Posterior cingulate gyrus (tissue), 11 donors: ENCODE measurements at regions of chr4 and their contacts with region 1.

Region 1: DNA sequence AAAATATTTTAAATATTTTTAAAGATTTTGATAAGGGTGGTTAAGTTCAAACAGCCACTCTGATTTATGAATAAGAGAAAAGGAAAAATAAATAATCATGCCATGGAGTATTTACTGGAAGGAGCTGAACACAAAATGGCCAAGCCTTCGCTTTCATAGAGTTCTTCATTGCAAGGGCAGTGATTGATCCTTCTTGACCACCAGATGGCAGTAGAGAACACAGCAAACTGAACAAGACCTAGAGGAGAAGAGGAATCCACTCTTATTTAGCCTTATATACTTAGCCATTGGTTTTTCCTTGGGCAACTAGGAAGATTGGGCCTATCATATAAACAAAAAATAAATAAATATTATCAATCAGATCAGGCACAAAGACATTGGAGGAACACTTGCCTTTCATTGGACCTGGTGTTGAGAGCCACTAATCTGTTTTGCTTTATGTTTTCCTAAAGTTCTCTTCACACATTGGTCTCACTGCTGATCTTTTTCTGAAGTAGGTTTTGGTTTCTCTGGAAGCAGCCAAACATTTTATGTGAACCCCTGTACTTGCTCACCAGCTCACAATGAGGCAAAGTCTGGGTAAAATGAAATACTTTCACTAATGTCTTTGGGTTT is 58.1 kb upstream of the PARM1 start:
- DNase-seq: peak in 3 of 10 donors; percentile 14 to 38 (median 24)

Region 2: GRCh38 chr4:74738470-74739140 is 136.3 kb before region 1 on chr4:
- intact Hi-C with region 1: no loop called
- DNase-seq: no peak

Region 3: DNA sequence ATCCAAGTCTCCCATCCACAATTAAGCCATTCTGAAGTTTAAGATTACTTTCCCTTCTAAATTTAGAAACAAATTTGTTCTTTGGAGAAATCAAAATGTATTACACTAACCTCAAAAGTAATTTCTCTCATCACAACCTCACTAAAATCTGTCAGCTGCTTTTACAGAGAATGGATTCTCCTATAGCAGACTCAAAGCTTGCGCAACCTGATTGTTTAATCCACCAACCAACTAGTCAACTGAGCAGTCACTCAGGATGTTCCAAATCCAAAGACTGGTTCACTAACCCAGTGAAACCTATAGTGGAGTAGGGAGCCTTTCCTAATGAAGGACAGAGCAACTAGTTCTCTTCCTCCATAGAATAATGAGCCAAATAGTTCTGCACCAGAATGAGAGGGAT is 595.0 kb after region 1 on chr4:
- intact Hi-C with region 1: loop called (anchors 10 kb)
- DNase-seq: no peak

Region 4: DNA sequence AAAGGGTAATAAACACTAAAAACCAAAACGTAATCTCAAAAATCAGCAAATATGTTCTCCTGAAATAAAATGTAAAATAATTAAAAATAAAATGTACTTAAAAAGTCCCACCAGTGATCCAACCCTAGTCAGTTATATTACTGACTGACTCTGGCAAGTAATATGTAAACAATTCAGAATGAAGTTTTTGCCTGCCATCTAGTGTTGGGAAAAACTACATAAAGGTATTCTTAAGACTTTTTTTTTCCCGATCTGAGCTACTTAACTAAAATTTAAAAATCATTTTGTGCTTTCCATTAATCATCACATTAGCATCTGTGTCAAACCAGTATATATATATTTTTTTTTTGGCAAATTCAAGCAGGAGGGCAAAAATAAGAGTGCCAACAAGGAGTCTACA is 615.3 kb after region 1 on chr4:
- intact Hi-C with region 1: loop called (anchors 5 kb)
- DNase-seq: no peak